Thyroid gland (tissue), 4 donors: ENCODE measurements at regions of chr1 and their contacts with region 1.

Region 1: GRCh38 chr1:156797212-156797871 is 19.3 kb downstream of the SH2D2A start:
- DNase-seq: peak; percentile 47
- H3K4me3 ChIP-seq: no peak overlapping the region
- H3K27ac ChIP-seq: no peak overlapping the region
- H3K4me1 ChIP-seq: peaks cover 2 to 10% of the 10 kb centered on the region in 2 donors
- H3K27me3 ChIP-seq: no peaks in the 10 kb centered on the region
- CTCF ChIP-seq: peak in 5 of 6 experiments; percentile 43 to 76 (median 56)
- POLR2A ChIP-seq: no peak

Region 2: DNA sequence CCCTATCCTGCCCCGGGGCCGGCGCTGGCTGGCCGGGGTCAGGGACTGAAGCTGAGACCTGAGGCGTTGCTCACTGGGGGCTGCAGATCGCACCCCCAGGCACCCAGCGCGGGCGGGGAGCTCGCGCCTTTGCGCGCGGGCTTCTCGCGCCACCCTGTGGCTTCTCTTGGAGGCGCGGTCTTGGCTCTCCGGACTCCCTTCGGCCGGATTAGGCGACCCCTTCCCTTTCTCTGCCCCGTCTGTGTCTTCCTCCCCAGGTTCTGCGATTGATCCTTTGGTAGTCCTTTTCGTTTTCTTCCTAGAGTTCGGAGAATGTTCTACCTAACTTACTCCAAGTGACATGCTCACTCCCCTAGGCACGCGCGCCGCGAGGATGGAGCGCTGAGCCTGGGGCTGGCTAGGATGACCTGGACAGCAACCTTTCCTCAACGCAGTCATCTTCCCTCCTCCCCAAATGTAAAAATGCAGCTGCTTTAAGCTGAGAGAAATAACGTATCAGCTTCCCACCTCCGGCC is 62.8 kb after region 1 on chr1:
- intact Hi-C with region 1: loop called (anchors 5 kb)
- DNase-seq: peak; percentile 22 to 30
- H3K4me3 ChIP-seq: peak overlapping the region in 1 of 3 donors; percentile 14
- H3K27ac ChIP-seq: no peak overlapping the region
- H3K4me1 ChIP-seq: peaks cover 19 to 26% of the 10 kb centered on the region in 2 donors
- H3K27me3 ChIP-seq: peaks cover 20% of the 10 kb centered on the region
- CTCF ChIP-seq: peak; percentile 49 to 79 (median 66)
- POLR2A ChIP-seq: no peak